SK-N-SH (cell line): ENCODE measurements at regions of chr2 and their contacts with region 1.

Region 1: GRCh38 chr2:121297217-121297830 is 12.3 kb upstream of the TFCP2L1 start:
- DNase-seq: peak; percentile 79
- H3K4me3 ChIP-seq: no peak overlapping the region
- H3K27ac ChIP-seq: no peak overlapping the region
- H3K4me1 ChIP-seq: no peaks in the 10 kb centered on the region
- H3K27me3 ChIP-seq: 0 out of 2 replicates have a peak, but pooled peaks cover 6% of the 10 kb centered on the region
- CTCF ChIP-seq: peak; percentile 58
- EP300 ChIP-seq: no peak
- RAD21 ChIP-seq: peak; percentile 62

Region 2: DNA sequence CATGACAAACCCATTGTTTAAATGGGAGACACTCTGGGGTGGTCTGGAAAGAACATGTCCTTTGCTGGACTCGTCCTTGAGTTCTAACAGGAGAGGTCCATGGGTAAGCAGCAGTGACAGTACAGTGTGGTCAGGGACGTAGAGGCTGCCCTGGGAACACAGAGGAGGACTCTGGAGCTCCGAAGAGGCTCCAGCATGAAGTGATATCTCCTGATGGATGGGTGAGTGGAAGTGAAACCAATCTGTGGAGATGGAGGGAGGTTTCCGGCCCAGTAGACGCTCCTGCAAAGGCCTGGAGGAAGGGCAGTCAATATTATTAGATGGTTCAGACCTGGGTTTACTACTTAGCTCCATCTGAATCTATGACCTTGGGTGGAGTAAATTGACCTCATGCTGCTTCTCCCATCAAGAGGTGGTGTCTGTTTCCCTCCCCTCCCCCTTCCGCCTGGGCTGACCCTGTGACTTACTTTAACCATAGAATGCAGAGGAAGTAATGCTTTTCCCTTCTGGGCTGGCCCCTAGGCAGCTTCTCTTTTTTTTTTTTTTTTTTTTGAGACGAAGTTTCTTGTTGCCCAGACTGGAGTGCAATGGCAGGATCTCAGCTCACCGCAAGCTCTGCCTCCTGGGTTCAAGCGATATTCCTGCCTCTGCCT is 10.1 kb before region 1 on chr2:
- CTCF ChIA-PET with region 1: interaction called, 15 read pairs
- POLR2A ChIA-PET with region 1: no interaction called
- DNase-seq: no peak
- H3K4me3 ChIP-seq: no peak overlapping the region
- H3K27ac ChIP-seq: no peak overlapping the region
- H3K4me1 ChIP-seq: peaks cover 0 to 3% of the 10 kb centered on the region in 2 experiments; a peak in 1 of 4 replicates
- H3K27me3 ChIP-seq: peaks cover 36% of the 10 kb centered on the region; the same call in 1 of the 2 replicates
- CTCF ChIP-seq: no peak
- EP300 ChIP-seq: no peak
- RAD21 ChIP-seq: no peak

Region 3: DNA sequence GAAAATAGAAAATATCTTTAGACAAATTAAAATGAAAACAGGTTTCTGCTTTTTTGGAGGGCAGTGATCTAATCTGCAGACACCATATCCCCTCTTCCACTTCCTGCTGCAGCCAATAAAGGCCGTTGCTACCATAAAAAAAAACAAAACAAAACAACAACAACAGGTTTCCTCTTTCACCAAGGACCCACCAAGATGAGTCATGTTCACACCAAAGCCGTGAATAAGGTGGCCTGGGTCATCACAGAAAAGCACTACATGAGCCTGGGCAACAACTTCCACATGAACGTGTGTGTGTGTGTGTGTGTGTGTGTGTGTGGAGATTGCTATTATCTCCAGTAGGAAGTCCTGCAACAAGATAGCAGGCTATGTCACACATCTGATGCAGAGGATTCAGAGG is 12.5 kb after region 1 on chr2:
- CTCF ChIA-PET with region 1: interaction called, 11 read pairs
- POLR2A ChIA-PET with region 1: no interaction called
- DNase-seq: peak; percentile 36
- H3K4me3 ChIP-seq: no peak overlapping the region
- H3K27ac ChIP-seq: no peak overlapping the region
- H3K4me1 ChIP-seq: no peaks in the 10 kb centered on the region
- H3K27me3 ChIP-seq: no peaks in the 10 kb centered on the region
- CTCF ChIP-seq: no peak
- EP300 ChIP-seq: no peak
- RAD21 ChIP-seq: no peak